Activated CD8-positive, alpha-beta T cell treated with anti-CD3 and anti-CD28 coated beads for 36 hours (primary cell): ENCODE measurements at regions of chr4 and their contacts with region 1.

Region 1: GRCh38 chr4:121217351-121217750 is 53.2 kb upstream of the TNIP3 start:
- DNase-seq: no peak
- ATAC-seq: no peak
- H3K4me3 Mint-ChIP-seq: no peak overlapping the region
- H3K27ac Mint-ChIP-seq: no peak overlapping the region
- H3K4me1 Mint-ChIP-seq: peaks cover 30% of the 10 kb centered on the region
- H3K27me3 Mint-ChIP-seq: no peaks in the 10 kb centered on the region
- CTCF ChIP-seq: no peak

Region 2: DNA sequence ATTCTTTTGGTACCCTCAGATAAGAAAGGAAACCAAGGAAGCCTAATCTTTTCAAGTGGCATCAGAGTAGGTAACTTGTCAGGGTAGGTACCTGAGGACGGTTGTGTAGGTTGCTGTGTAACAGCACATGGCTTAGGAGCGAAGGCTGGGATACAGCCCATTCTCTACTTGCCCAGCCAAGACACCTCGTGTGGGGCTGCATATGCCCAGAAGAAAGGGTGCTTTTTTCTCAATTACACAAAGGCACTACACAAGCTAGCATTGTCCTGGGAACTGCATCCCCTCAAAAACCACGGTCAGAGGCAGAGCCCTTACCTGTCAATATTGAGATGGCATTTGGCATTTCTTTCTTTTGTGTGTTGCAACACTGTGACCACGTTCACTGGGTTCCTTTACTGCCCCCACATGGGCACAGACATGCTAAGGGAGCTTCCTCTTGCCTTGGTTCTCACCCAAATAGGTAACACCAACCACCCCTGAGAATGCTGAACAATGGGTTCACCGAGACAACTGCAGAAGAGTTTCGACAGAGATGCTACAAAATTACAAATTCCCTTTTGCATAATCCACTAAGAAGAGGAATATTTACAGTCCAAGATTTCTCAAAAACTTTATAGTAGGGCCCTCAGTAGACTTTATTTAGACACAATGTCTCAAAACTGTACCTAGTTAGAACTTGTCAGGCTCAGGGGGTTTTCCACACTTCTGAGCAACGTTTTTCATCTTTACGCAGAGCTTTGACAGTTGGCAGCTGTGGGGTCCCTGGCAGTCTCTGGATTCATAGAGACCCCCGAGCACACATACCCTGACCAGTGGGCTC is 17.4 kb before region 1 on chr4:
- CTCF ChIA-PET with region 1: interaction called, 11 read pairs
- POLR2A ChIA-PET with region 1: interaction called, 4 read pairs
- intact Hi-C with region 1: no loop called
- DNase-seq: peak; percentile 65
- ATAC-seq: peak; percentile 93
- H3K4me3 Mint-ChIP-seq: peak overlapping the region; percentile 41
- H3K27ac Mint-ChIP-seq: peak overlapping the region; percentile 86
- H3K4me1 Mint-ChIP-seq: peaks cover 29% of the 10 kb centered on the region
- H3K27me3 Mint-ChIP-seq: no peaks in the 10 kb centered on the region
- CTCF ChIP-seq: no peak

Region 3: DNA sequence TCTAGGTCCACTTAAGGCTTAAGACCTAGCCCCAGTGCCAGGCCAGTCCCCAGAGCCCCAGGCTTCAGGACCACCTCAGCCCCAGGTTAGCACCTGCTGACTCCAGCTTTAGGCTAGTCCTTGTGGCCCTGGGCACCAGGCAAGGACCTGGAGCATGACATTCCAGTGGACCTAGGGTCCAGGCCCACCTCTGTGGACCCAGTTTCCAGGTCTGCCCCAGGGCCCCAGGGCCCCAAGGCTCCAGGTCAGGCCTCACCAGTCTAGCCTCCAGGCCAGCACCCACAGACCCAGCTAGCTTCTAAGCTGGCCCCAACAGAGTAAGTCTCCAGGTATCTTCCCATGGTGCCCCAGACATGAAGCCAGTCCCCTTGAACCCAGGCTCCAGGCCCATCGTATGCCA is 66.0 kb after region 1 on chr4:
- CTCF ChIA-PET with region 1: no interaction called
- POLR2A ChIA-PET with region 1: no interaction called
- intact Hi-C with region 1: no loop called
- DNase-seq: no peak
- ATAC-seq: no peak
- H3K4me3 Mint-ChIP-seq: no peak overlapping the region
- H3K27ac Mint-ChIP-seq: no peak overlapping the region
- H3K4me1 Mint-ChIP-seq: peaks cover 7% of the 10 kb centered on the region
- H3K27me3 Mint-ChIP-seq: peaks cover 4% of the 10 kb centered on the region
- CTCF ChIP-seq: no peak